ENCODE measurements at regions of chr5 and their contacts with region 1.

Region 1: GRCh38 chr5:5523066-5523505 is 100.6 kb downstream of the ICE1 start:
- DNase-seq: no peak

Region 2: GRCh38 chr5:5781335-5781734 is 258.2 kb after region 1 on chr5:
- intact Hi-C with region 1: no loop called
- DNase-seq: no peak

Region 3: GRCh38 chr5:6107675-6108539 is 584.8 kb after region 1 on chr5:
- intact Hi-C with region 1: loop called in 1 of 2 experiments (anchors 10 kb)
- DNase-seq: no peak

Measured in posterior vena cava (tissue), 2 donors.